ENCODE measurements at regions of chrX and their contacts with region 1.

Region 1: GRCh38 chrX:139126493-139126892 is 404.0 kb upstream of the F9 start:
- DNase-seq: no peak
- ATAC-seq: peak in 2 of 4 donors; percentile 49
- H3K4me3 ChIP-seq: no peak overlapping the region
- H3K27ac ChIP-seq: no peak overlapping the region
- H3K4me1 ChIP-seq: no peaks in the 10 kb centered on the region
- H3K27me3 ChIP-seq: peaks cover 0 to 8% (median 0%) of the 10 kb centered on the region in 9 donors
- CTCF ChIP-seq: peak in 11 of 12 donors; percentile 6 to 48 (median 30)
- POLR2A ChIP-seq: no peak

Region 2: DNA sequence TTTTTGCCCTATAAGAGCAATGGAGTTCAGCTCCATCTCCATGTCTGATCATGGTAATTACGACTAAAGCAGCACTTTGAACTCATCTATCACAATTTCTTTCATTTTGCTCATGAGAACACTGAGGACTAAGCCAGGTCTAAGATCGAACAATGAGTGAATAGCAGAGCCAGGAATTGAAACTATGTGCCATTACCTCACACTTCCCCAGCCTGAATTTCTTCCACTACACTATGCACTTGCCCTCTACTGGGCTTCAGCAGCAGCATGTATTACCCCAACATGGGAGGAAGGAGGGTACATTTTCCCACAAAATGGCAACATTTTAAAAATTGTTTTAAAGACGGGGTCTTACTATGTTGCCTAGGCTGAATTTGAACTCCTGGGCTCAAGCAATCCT is 140.3 kb before region 1 on chrX:
- intact Hi-C with region 1: no loop called
- DNase-seq: no peak
- ATAC-seq: no peak
- H3K4me3 ChIP-seq: no peak overlapping the region
- H3K27ac ChIP-seq: no peak overlapping the region
- H3K4me1 ChIP-seq: peaks cover 0 to 6% (median 0%) of the 10 kb centered on the region in 12 donors
- H3K27me3 ChIP-seq: peaks cover 0 to 18% (median 0%) of the 10 kb centered on the region in 9 donors
- CTCF ChIP-seq: no peak
- POLR2A ChIP-seq: no peak

Region 3: GRCh38 chrX:139429913-139430312 is 303.4 kb after region 1 on chrX:
- intact Hi-C with region 1: loop called in 1 of 10 experiments (anchors 5 kb)
- DNase-seq: no peak
- ATAC-seq: no peak
- H3K4me3 ChIP-seq: no peak overlapping the region
- H3K27ac ChIP-seq: no peak overlapping the region
- H3K4me1 ChIP-seq: no peaks in the 10 kb centered on the region
- H3K27me3 ChIP-seq: no peaks in the 10 kb centered on the region
- CTCF ChIP-seq: peak in 5 of 12 donors; percentile 8 to 19 (median 12)
- POLR2A ChIP-seq: no peak

Region 4: DNA sequence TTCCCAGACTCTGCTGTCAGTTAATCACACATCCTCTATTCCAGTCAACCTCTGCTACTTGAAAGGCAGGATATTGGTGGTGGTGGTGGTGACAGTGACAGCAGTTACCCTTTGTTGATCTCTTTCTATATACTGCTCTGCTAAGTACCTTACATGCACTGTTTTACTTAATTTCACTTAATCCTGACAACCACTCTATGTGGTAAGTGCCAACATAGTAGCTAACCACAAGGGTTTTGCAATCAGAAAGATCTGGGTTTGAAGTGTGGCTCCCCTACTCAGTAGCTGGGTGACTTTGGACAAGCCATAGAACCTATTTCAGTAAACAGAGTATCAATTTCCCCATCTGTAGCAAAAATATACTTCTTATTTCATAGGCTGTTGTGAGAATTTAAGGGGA is 379.8 kb after region 1 on chrX:
- intact Hi-C with region 1: no loop called
- DNase-seq: no peak
- ATAC-seq: no peak
- H3K4me3 ChIP-seq: no peak overlapping the region
- H3K27ac ChIP-seq: no peak overlapping the region
- H3K4me1 ChIP-seq: no peaks in the 10 kb centered on the region
- H3K27me3 ChIP-seq: no peaks in the 10 kb centered on the region
- CTCF ChIP-seq: no peak
- POLR2A ChIP-seq: no peak

Region 5: GRCh38 chrX:139559383-139560042 is 433.0 kb after region 1 on chrX:
- intact Hi-C with region 1: loop called in 2 of 10 experiments (anchors 10 kb)
- DNase-seq: peak in 1 of 5 donors; percentile 16
- ATAC-seq: peak in 1 of 4 donors; percentile 70
- H3K4me3 ChIP-seq: no peak overlapping the region
- H3K27ac ChIP-seq: no peak overlapping the region
- H3K4me1 ChIP-seq: no peaks in the 10 kb centered on the region
- H3K27me3 ChIP-seq: peaks cover 0 to 22% (median 0%) of the 10 kb centered on the region in 9 donors
- CTCF ChIP-seq: peak; percentile 23 to 53 (median 40)
- POLR2A ChIP-seq: no peak